ENCODE measurements at regions of chr6 and their contacts with region 1.

Region 1: DNA sequence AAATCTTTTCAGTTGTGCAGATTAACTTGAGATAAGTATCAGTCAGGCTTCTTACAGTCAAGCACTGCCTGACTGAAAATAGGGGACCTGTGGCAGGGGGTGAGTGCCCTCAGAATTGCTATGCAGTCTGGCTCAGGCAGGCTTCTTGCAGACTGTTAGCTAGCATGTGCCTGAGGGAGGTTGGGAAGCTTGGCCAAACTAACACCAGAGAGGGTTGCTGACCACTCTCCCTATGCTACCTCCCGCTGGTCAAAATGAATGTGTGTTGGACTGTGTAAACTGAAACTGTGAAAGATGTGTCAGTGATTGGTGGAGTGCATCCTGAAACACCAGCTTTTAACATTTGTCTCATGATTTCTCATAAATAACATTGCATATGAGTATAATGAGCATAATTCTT is 622.3 kb upstream of the IMPG1 start:
- DNase-seq: no peak

Region 2: GRCh38 chr6:76861403-76861802 is 166.6 kb after region 1 on chr6:
- intact Hi-C with region 1: loop called (anchors 5 kb)
- DNase-seq: no peak

Measured in cardiac septum (tissue), 1 donor.